ENCODE measurements at regions of chr19 and their contacts with region 1.

Region 1: GRCh38 chr19:55178781-55179599 is 1.1 kb downstream of the SYT5 start:
- DNase-seq: peak; percentile 83
- H3K4me3 Mint-ChIP-seq: peak overlapping the region; percentile 58
- H3K27ac Mint-ChIP-seq: no peak overlapping the region
- H3K4me1 Mint-ChIP-seq: peaks cover 18% of the 10 kb centered on the region
- H3K27me3 Mint-ChIP-seq: peaks cover 69% of the 10 kb centered on the region

Region 2: DNA sequence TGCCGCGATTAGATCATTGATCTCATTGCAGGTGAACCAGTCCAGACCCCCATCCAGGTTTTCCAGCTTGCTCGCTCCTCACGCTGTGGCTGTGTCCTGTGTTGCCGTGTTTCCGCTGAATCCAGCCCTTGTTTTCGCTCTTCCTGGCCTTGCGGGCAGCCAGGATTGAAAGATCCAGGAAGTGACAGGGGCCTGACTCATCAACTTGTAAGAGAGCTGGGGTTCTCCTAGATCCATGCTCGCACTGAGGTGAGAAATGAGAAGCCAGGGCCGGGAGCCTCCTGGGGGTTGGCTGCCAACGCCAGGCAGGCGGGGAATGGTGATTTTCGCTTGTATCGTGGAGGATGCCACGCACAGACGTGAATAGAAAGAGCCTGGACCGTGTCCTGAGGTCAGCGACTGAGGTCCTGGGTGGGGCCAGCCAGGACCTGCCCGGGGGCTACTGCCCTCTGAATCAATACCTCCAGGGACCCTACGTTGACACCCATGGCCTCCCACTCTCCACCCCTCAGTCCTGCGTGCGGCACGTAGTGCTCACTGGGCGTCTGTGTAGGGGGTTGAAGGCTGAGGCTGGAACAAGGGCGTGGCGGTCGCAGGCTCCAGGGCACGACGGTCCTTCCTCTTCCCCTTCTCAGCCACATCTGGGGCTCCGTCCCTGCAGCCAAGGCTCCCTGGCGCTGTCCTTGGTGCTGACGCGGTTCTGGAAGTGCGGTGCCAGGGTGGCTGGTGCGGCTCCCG is 37.6 kb after region 1 on chr19:
- CTCF ChIA-PET with region 1: no interaction called
- intact Hi-C with region 1: loop called (anchors 2 kb)
- DNase-seq: peak; percentile 79
- H3K4me3 Mint-ChIP-seq: peak overlapping the region; percentile 50
- H3K27ac Mint-ChIP-seq: no peak overlapping the region
- H3K4me1 Mint-ChIP-seq: peaks cover 13% of the 10 kb centered on the region
- H3K27me3 Mint-ChIP-seq: peaks cover 22% of the 10 kb centered on the region

Region 3: DNA sequence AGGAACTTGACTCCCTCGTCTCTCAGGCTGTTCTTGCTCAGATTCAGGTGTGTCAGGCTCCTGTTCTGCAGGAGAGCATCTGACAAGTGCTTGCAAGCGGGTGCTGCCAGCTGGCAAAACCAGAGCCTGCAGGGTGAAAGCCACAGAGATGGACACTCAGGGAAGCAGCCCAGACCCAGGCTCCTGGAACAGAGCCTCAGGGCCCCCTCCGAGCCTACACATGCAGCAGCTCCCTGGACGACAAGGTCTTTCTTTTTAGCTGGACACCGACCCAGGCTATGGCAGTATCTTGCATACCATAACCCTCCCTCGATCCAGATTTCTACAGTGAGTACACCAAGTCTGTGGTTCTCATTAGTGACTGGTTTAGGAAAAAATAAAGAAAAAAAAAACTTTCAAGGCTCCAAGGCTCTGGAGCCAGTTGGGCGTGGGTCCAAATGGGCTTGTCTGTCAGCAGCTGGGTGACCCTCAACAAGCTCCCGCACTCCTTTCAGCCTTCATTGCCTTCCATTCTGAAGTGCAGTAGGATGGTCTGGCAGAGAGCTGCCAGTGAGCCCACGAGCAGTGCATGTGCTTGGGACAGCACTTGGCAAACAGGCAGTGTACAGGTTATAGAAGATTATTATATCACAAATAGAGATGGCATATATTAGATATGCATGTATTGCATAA is 723.2 kb after region 1 on chr19:
- CTCF ChIA-PET with region 1: no interaction called
- intact Hi-C with region 1: no loop called
- DNase-seq: no peak
- H3K4me3 Mint-ChIP-seq: no peak overlapping the region
- H3K27ac Mint-ChIP-seq: no peak overlapping the region
- H3K4me1 Mint-ChIP-seq: no peaks in the 10 kb centered on the region
- H3K27me3 Mint-ChIP-seq: no peaks in the 10 kb centered on the region